Vagina (tissue), 2 donors: ENCODE measurements at regions of chr12 and their contacts with region 1.

Region 1: DNA sequence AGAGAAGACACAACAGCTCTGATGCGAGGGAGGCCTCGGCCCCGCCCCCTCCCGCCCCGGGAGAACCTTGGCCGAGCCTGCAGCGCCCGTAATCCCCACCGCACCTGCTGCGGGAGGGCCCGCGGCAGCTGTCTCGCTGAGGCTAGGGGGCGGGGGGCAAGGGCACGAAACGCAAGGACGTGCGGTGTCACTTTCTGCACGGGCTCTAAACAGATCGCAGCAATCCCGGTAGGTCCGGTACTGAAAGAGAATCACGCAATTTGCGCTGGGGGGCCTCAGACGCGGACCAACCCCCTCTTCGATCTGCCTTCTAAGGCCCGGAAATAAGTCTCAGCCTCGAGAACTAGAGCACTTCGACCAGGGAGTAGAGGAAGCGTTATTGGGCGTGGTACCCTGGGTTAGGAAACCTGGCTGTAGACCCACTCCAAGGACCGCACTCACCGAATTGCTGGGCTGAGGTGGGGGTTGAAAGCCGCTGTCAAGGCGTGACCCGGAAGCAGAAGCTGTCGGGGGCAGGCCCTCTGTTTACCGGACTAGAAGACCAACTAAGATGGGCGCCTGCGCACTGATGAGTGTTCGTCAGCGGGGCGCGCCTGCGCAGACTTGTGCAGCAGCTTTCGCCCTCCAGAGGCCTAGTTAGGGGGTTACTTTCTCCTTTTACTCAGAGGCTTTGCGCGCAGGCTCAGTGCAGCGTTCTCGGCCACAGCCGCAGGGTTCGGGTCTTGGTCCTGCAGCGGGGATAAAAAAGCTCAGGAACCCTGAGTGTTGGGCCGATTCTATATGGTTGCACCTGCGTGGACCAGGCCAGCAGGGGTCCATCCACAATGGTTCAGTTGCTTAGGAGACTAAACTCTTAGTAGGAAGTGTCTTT is at the start of gene ASB8:
- DNase-seq: peak in 1 of 2 donors; percentile 97
- H3K4me3 ChIP-seq: peak within 1 kb of the TSS; percentile 76 to 95
- H3K27ac ChIP-seq: peak within 1 kb of the TSS; percentile 90
- H3K4me1 ChIP-seq: peaks cover 15% of the 10 kb centered on the region
- H3K27me3 ChIP-seq: no peaks in the 10 kb centered on the region
- CTCF ChIP-seq: peak; percentile 34 to 59 (median 34)
- POLR2A ChIP-seq: peak in 1 of 2 donors; percentile 41
- total RNA-seq, gene ASB8: 16.9 TPM

Region 2: GRCh38 chr12:48105862-48106680 is 51.2 kb before region 1 on chr12 and contains the start of gene SENP1:
- intact Hi-C with region 1: loop called (anchors 5 kb)
- DNase-seq: peak in 1 of 2 donors; percentile 90
- H3K4me3 ChIP-seq: peak within 1 kb of the TSS; percentile 82 to 95
- H3K27ac ChIP-seq: peak within 1 kb of the TSS; percentile 91
- H3K4me1 ChIP-seq: peaks cover 26% of the 10 kb centered on the region
- H3K27me3 ChIP-seq: no peaks in the 10 kb centered on the region
- CTCF ChIP-seq: peak; percentile 7 to 38 (median 31)
- POLR2A ChIP-seq: no peak
- total RNA-seq, gene SENP1: 21.4 TPM

Region 3: DNA sequence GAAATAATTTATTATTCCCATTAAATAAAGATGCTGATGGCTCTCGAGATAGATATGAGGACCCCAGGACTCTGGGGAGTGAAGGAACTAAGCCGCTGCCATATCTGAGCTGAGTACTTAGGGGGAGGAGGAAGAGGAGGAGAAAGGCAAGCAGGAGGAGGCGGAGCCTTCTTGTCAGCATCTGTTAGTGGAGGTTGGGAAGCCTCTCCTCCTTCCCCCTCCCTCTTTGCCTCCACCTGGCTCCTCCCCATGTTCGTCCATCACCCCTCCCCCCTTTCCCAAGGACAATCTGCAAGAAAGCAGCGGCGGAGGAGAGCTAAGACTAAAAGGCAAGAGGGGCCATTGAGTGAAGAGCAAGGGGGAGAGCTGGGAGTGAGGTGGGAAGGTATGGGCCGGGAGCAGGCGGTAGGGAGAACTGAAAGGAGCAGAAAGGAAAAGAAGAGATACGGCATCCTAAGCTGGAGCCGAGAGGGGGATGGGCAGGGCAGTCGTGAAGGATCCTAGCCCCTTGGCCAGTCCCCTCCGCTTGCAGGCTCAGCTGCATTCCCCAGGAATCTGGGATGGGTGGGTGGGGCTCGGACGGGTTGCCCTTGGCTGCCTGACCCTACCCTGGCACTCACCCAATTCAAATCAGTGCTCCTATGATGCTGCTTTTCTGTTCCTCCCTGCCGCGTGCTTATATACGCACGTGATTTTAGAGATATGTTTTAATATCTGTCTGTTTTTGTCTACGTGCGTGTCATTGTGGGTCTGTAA is 38.0 kb before region 1 on chr12 and contains the start of gene PFKM:
- intact Hi-C with region 1: no loop called
- DNase-seq: peak in 1 of 2 donors; percentile 92
- H3K4me3 ChIP-seq: peak within 1 kb of the TSS; percentile 52 to 71
- H3K27ac ChIP-seq: peak within 1 kb of the TSS; percentile 82
- H3K4me1 ChIP-seq: peaks cover 28% of the 10 kb centered on the region
- H3K27me3 ChIP-seq: no peaks in the 10 kb centered on the region
- CTCF ChIP-seq: no peak
- POLR2A ChIP-seq: peak in 1 of 2 donors; percentile 17
- total RNA-seq, gene PFKM: 29.0 TPM

Region 4: DNA sequence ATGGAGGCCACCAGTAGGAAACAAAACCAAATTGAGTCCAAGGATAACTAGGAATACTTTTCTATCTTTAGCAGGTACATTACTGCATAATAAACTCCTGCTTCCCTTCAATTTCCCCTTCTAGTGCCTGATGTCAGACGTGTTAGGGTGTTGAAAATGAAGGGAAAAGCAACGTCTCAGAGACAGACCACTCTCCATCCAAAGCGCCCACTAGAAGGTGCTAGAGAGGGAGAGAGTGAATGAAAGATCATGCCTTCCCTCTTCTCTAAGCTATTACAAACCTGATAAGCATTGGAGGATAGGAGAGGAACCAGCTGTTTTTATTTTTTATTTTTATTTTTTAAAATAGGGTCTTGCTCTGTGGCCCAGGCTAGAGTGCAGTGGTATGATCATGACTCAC is 129.4 kb after region 1 on chr12:
- intact Hi-C with region 1: no loop called
- DNase-seq: no peak
- H3K4me3 ChIP-seq: no peak overlapping the region
- H3K27ac ChIP-seq: no peak overlapping the region
- H3K4me1 ChIP-seq: no peaks in the 10 kb centered on the region
- H3K27me3 ChIP-seq: no peaks in the 10 kb centered on the region
- CTCF ChIP-seq: no peak
- POLR2A ChIP-seq: no peak